BJ (cell line): ENCODE measurements at regions of chr2 and their contacts with region 1.

Region 1: GRCh38 chr2:227877421-227878310 is 6.2 kb downstream of the DAW1 start:
- DNase-seq: no peak
- H3K4me3 ChIP-seq: no peak overlapping the region
- H3K27me3 ChIP-seq: no peaks in the 10 kb centered on the region
- CTCF ChIP-seq: no peak

Region 2: GRCh38 chr2:227862227-227862740 is 15.4 kb before region 1 on chr2:
- CTCF ChIA-PET with region 1: interaction called, 21 read pairs
- POLR2A ChIA-PET with region 1: no interaction called
- DNase-seq: no peak
- H3K4me3 ChIP-seq: no peak overlapping the region
- H3K27me3 ChIP-seq: no peaks in the 10 kb centered on the region
- CTCF ChIP-seq: peak; percentile 56

Region 3: DNA sequence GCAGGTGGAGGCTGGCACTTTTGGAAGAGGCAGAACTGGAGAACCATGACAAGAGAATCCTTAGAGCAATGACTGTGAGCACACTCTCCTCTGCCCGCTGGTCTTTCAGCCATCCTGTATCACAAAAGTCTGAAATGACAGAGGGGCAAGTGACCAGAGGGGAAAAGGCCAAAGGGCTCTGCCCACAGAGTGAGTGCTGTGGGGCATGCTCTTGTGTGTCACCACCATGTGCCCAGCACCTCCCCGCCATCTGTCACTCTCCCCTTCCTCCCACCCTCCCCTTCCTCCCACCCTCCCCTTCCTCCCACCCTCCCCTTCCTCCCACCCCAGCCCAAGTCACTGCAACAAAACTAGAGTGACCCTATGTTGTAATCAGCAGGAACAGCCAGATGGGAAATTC is 25.7 kb after region 1 on chr2:
- CTCF ChIA-PET with region 1: no interaction called
- POLR2A ChIA-PET with region 1: no interaction called
- DNase-seq: no peak
- H3K4me3 ChIP-seq: no peak overlapping the region
- H3K27me3 ChIP-seq: no peaks in the 10 kb centered on the region
- CTCF ChIP-seq: no peak